ENCODE measurements at regions of chr1 and their contacts with region 1.

Region 1: GRCh38 chr1:1231400-1232223 is at the start of gene SDF4:
- DNase-seq: peak; percentile 97
- ATAC-seq: peak; percentile 96 to 99 (median 98)
- H3K4me3 ChIP-seq: peak within 1 kb of the TSS; percentile 73 to 100 (median 96)
- H3K27ac ChIP-seq: peak within 1 kb of the TSS; percentile 92 to 99 (median 96)
- H3K4me1 ChIP-seq: peaks cover 11 to 48% (median 30%) of the 10 kb centered on the region in 9 donors
- H3K27me3 ChIP-seq: no peaks in the 10 kb centered on the region
- CTCF ChIP-seq: no peak
- total RNA-seq, gene SDF4: 95.6 to 174 (median 123) TPM

Region 2: GRCh38 chr1:1157426-1157913 is 74.1 kb before region 1 on chr1:
- intact Hi-C with region 1: loop called in 3 of 10 experiments (anchors 5 kb)
- DNase-seq: peak; percentile 90 to 92
- ATAC-seq: peak; percentile 89 to 96 (median 92)
- H3K4me3 ChIP-seq: peak overlapping the region; percentile 52 to 85 (median 74)
- H3K27ac ChIP-seq: peak overlapping the region; percentile 89 to 99 (median 98)
- H3K4me1 ChIP-seq: peaks cover 0 to 17% (median 13%) of the 10 kb centered on the region in 9 donors
- H3K27me3 ChIP-seq: peaks cover 0 to 15% (median 12%) of the 10 kb centered on the region in 7 donors
- CTCF ChIP-seq: no peak

Region 3: GRCh38 chr1:1273512-1274298 is 42.1 kb after region 1 on chr1 and contains the start of gene UBE2J2:
- intact Hi-C with region 1: loop called in 1 of 10 experiments (anchors 5 kb)
- DNase-seq: peak; percentile 94 to 95
- ATAC-seq: peak; percentile 96 to 98 (median 97)
- H3K4me3 ChIP-seq: peak within 1 kb of the TSS; percentile 81 to 99 (median 96)
- H3K27ac ChIP-seq: peak within 1 kb of the TSS; percentile 53 to 95 (median 92)
- H3K4me1 ChIP-seq: peaks cover 23 to 49% (median 41%) of the 10 kb centered on the region in 9 donors
- H3K27me3 ChIP-seq: no peaks in the 10 kb centered on the region
- CTCF ChIP-seq: peak in 4 of 9 donors; percentile 16 to 37 (median 35)
- total RNA-seq, gene UBE2J2: 23.5 to 41.9 (median 29.2) TPM